ENCODE measurements at regions of chr3 and their contacts with region 1.

Region 1: GRCh38 chr3:73502609-73503583 is 121.8 kb downstream of the PDZRN3 start:
- DNase-seq: no peak
- H3K4me3 ChIP-seq: no peak overlapping the region
- H3K27ac ChIP-seq: no peak overlapping the region
- H3K4me1 ChIP-seq: 0 out of 7 replicates have a peak, but pooled peaks cover 0 to 1% (median 0%) of the 10 kb centered on the region in 4 experiments
- H3K27me3 ChIP-seq: no peaks in the 10 kb centered on the region
- CTCF ChIP-seq: peak; percentile 48 to 93 (median 91)
- EP300 ChIP-seq: no peak
- POLR2A ChIP-seq: no peak
- RAD21 ChIP-seq: peak; percentile 99

Region 2: DNA sequence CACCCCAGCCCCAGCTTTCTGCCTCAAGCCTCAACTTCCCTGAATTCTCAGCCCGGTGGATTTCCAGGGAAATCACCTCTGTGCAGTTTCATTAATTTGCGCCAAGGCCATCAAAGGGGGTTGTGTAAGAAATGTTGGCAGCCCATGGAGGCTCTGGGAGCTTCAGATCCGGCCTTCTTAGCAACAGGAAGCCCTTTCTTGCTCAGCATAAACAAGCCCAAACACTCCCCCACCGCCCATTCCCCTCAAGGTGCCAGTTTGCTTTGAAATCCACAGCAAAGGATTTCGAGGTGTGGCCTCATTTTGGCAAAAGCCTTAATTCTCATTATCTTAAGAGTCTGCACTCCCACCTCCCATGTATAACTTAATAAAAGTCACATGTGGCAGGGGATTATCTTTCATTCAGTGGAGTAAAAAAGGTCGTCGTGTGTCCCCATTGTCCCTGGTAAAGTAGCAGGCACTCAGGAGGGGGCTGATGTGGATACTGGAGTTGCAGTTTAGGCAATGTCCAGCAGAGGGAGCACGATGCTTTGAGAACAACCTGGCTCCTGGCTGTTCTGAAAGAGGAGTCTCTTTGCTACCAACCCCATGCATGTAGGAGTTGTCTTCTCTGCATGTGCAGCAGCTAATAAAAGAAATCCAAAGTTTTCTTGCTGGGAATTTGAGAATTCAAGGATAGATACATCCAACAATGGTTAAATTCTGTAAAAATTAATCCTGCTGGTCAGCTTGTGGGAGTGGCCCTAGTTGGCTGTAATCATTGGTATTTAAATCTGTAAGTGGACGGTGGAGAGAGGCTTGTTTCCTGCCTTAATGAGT is 401.9 kb before region 1 on chr3:
- CTCF ChIA-PET with region 1: interaction called, 26 read pairs
- POLR2A ChIA-PET with region 1: no interaction called
- DNase-seq: peak; percentile 74 to 94
- H3K4me3 ChIP-seq: no peak overlapping the region
- H3K27ac ChIP-seq: no peak overlapping the region
- H3K4me1 ChIP-seq: peaks cover 0 to 4% (median 1%) of the 10 kb centered on the region in 4 experiments; a peak in 3 of 7 replicates
- H3K27me3 ChIP-seq: no peaks in the 10 kb centered on the region
- CTCF ChIP-seq: peak; percentile 88 to 98 (median 90)
- EP300 ChIP-seq: no peak
- POLR2A ChIP-seq: no peak
- RAD21 ChIP-seq: peak; percentile 96 to 97

Region 3: GRCh38 chr3:73432023-73432705 is 70.7 kb before region 1 on chr3:
- CTCF ChIA-PET with region 1: interaction called, 10 read pairs
- POLR2A ChIA-PET with region 1: no interaction called
- DNase-seq: no peak
- H3K4me3 ChIP-seq: no peak overlapping the region
- H3K27ac ChIP-seq: no peak overlapping the region
- H3K4me1 ChIP-seq: peaks cover under 1 to 10% (median 3%) of the 10 kb centered on the region in 4 experiments; a peak in 5 of 7 replicates
- H3K27me3 ChIP-seq: no peaks in the 10 kb centered on the region
- CTCF ChIP-seq: peak; percentile 34 to 63 (median 54)
- EP300 ChIP-seq: no peak
- POLR2A ChIP-seq: no peak
- RAD21 ChIP-seq: peak; percentile 59 to 66

Region 4: DNA sequence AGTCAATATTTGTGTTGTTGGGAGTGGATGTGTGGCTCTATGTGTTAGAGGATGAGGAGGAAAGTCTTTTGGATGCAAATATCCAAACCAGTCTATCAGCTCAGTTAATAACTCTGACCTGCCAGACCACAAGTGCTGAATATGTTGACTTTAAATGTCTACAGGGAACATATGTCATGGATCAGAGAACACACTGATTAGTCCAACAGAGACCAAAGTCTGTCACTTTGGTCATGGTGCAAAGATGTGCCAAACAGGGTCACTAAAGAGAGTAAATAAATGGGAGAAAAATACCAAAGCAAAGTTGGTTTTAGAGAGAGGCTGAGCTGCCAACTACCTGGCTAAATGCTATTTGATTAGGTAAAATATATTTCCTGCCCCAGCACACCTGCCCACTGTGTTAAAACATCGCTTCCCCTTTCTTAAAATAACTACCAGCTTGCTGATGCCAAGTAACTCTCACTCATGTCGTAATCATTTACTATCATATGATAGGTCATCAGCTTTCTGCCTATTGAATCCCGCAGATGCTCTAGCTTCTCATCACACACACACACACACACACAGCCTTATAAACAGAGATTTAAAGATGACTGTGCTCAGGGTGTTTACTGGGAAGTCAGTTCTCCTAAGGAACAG is 51.5 kb before region 1 on chr3:
- CTCF ChIA-PET with region 1: interaction called, 15 read pairs
- POLR2A ChIA-PET with region 1: no interaction called
- DNase-seq: no peak
- H3K4me3 ChIP-seq: no peak overlapping the region
- H3K27ac ChIP-seq: no peak overlapping the region
- H3K4me1 ChIP-seq: peaks cover 0 to 10% (median 7%) of the 10 kb centered on the region in 4 experiments; a peak in 3 of 7 replicates
- H3K27me3 ChIP-seq: no peaks in the 10 kb centered on the region
- CTCF ChIP-seq: no peak
- EP300 ChIP-seq: no peak
- POLR2A ChIP-seq: no peak
- RAD21 ChIP-seq: no peak

Region 5: GRCh38 chr3:73484656-73485248 is 18.1 kb before region 1 on chr3:
- CTCF ChIA-PET with region 1: interaction called, 21 read pairs
- POLR2A ChIA-PET with region 1: no interaction called
- DNase-seq: no peak
- H3K4me3 ChIP-seq: peak overlapping the region in 1 of 4 experiments; percentile 48; a peak in 2 of 8 replicates
- H3K27ac ChIP-seq: no peak overlapping the region
- H3K4me1 ChIP-seq: peaks cover 10 to 23% (median 22%) of the 10 kb centered on the region in 4 experiments
- H3K27me3 ChIP-seq: peaks cover 0 to 1% (median 0%) of the 10 kb centered on the region in 4 experiments; a peak in 1 of 7 replicates
- CTCF ChIP-seq: no peak
- EP300 ChIP-seq: no peak
- POLR2A ChIP-seq: 0 out of 3 replicates have a peak, but pooled peaks of 1 of the 2 experiments have one; percentile 34
- RAD21 ChIP-seq: no peak

Region 6: GRCh38 chr3:73490453-73491286 is 12.2 kb before region 1 on chr3:
- CTCF ChIA-PET with region 1: interaction called, 21 read pairs
- POLR2A ChIA-PET with region 1: no interaction called
- DNase-seq: no peak
- H3K4me3 ChIP-seq: no peak overlapping the region
- H3K27ac ChIP-seq: no peak overlapping the region
- H3K4me1 ChIP-seq: peaks cover 3 to 17% (median 12%) of the 10 kb centered on the region in 4 experiments; a peak in 6 of 7 replicates
- H3K27me3 ChIP-seq: no peaks in the 10 kb centered on the region
- CTCF ChIP-seq: no peak
- EP300 ChIP-seq: no peak
- POLR2A ChIP-seq: no peak
- RAD21 ChIP-seq: no peak

Region 7: GRCh38 chr3:73602170-73602569 is 99.3 kb after region 1 on chr3:
- CTCF ChIA-PET with region 1: no interaction called
- POLR2A ChIA-PET with region 1: no interaction called
- DNase-seq: no peak
- H3K4me3 ChIP-seq: no peak overlapping the region
- H3K27ac ChIP-seq: no peak overlapping the region
- H3K4me1 ChIP-seq: peaks cover 0 to 6% (median 5%) of the 10 kb centered on the region in 4 experiments; a peak in 3 of 7 replicates
- H3K27me3 ChIP-seq: no peaks in the 10 kb centered on the region
- CTCF ChIP-seq: no peak
- EP300 ChIP-seq: no peak
- POLR2A ChIP-seq: no peak
- RAD21 ChIP-seq: no peak

Region 8: DNA sequence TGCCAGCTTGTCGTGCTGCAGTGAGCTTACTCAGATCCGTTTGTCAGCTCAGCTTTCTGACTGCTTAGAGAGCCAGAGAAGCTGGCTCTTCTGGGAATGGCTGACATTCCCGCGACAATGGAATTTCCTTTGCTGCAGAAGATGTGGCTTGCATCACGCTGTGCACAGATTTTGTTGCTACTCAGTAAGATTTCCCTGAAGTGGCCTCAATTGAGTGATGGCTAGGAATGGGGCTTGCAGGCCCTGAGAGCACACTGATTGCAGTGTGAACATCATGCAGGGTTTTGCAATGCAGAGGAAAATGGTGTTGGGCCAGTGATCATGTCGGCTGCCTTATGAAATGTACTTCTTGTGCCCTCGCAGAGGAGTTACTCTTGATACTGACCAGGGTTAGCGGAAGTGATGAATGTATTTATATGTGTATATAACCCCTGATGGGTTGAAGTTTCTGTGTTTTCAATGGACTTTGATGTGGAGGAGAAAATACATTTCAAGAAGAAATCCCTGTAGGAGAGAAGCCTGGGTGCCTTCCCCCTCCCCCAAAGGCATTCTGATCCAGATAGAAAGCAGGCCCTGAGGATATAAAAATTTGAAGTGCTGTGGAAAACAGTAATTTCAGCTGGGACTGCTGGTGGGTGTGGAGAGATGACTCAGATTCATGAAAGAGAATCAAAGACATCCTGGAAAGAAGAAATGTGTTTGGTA is 224.4 kb after region 1 on chr3:
- CTCF ChIA-PET with region 1: no interaction called
- POLR2A ChIA-PET with region 1: no interaction called
- DNase-seq: peak in 1 of 2 experiments; percentile 49
- H3K4me3 ChIP-seq: no peak overlapping the region
- H3K27ac ChIP-seq: no peak overlapping the region
- H3K4me1 ChIP-seq: peaks cover 8 to 18% (median 15%) of the 10 kb centered on the region in 4 experiments
- H3K27me3 ChIP-seq: peaks cover 0 to 2% (median 0%) of the 10 kb centered on the region in 4 experiments; a peak in 1 of 7 replicates
- CTCF ChIP-seq: no peak
- EP300 ChIP-seq: no peak
- POLR2A ChIP-seq: no peak
- RAD21 ChIP-seq: no peak

Region 9: GRCh38 chr3:73745526-73746191 is 242.8 kb after region 1 on chr3:
- CTCF ChIA-PET with region 1: no interaction called
- POLR2A ChIA-PET with region 1: no interaction called
- DNase-seq: no peak
- H3K4me3 ChIP-seq: no peak overlapping the region
- H3K27ac ChIP-seq: no peak overlapping the region
- H3K4me1 ChIP-seq: no peaks in the 10 kb centered on the region
- H3K27me3 ChIP-seq: no peaks in the 10 kb centered on the region
- CTCF ChIP-seq: no peak
- EP300 ChIP-seq: no peak
- POLR2A ChIP-seq: no peak
- RAD21 ChIP-seq: no peak